Heart right ventricle (tissue), 16 donors: ENCODE measurements at regions of chr2 and their contacts with region 1.

Region 1: GRCh38 chr2:170054997-170055396 is 123.0 kb upstream of the MYO3B start:
- DNase-seq: no peak
- ATAC-seq: no peak
- H3K4me3 ChIP-seq: no peak overlapping the region
- H3K27ac ChIP-seq: no peak overlapping the region
- H3K4me1 ChIP-seq: peaks cover 0 to 8% (median 0%) of the 10 kb centered on the region in 9 donors
- H3K27me3 ChIP-seq: no peaks in the 10 kb centered on the region
- CTCF ChIP-seq: no peak

Region 2: DNA sequence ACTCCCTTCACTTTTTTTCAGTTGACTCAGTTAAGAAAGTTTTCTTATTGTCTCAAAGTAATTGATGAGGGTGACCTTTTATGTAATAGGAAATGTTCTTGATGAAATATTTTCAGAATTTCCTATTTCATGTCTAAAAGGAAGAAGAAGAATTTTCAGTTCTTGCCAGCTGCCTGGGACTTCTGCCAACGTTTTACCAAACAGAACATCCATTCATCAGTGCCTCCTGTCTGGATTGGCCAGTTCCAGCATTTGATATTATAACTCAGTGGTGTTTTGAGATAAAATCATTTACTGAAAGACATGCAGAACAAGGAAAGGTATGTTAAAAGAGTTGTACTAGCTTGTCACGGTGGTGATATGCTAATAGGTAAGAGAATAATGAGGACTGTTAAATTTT is 18.3 kb after region 1 on chr2:
- intact Hi-C with region 1: loop called in 1 of 10 experiments (anchors 2 kb)
- DNase-seq: peak; percentile 13 to 57
- ATAC-seq: peak in 4 of 8 donors; percentile 33 to 68 (median 47)
- H3K4me3 ChIP-seq: no peak overlapping the region
- H3K27ac ChIP-seq: peak overlapping the region in 1 of 10 donors; percentile 13
- H3K4me1 ChIP-seq: peaks cover 0 to 19% (median 14%) of the 10 kb centered on the region in 9 donors
- H3K27me3 ChIP-seq: no peaks in the 10 kb centered on the region
- CTCF ChIP-seq: no peak